ENCODE measurements at regions of chr2 and their contacts with region 1.

Region 1: DNA sequence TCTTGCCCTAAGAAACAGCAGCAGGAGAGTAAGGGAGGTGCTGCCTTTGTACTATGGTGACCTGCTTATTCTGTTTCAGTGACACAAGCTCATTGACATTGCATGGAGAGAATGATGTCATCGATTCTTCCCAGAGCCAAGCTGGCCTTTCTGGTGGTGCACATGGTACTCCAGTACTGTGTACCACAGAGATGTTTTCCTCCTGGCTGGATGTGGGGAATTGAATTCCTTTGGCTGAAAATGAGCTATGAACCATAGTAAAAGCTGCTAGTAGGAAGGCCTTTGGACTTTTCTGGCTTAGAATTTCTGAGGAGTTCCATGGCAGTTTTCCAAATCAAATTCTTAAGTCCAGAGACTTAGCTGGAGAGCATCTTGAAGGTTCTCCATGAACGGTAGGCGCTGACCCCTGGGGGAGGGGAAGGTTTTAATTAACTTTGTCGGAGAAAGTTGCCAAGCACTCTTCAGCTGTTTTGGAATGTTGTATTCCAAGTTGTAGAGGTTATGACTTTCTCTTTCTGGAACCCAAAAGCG is 17.1 kb upstream of the B3GNT2 start:
- DNase-seq: peak; percentile 53
- H3K4me3 ChIP-seq: no peak overlapping the region
- H3K27ac ChIP-seq: no peak overlapping the region
- H3K4me1 ChIP-seq: no peaks in the 10 kb centered on the region
- H3K27me3 ChIP-seq: no peaks in the 10 kb centered on the region
- CTCF ChIP-seq: no peak
- POLR2A ChIP-seq: no peak

Region 2: GRCh38 chr2:61727746-61728145 is 451.1 kb before region 1 on chr2:
- intact Hi-C with region 1: no loop called
- DNase-seq: no peak
- H3K4me3 ChIP-seq: no peak overlapping the region
- H3K27ac ChIP-seq: no peak overlapping the region
- H3K4me1 ChIP-seq: no peaks in the 10 kb centered on the region
- H3K27me3 ChIP-seq: no peaks in the 10 kb centered on the region
- CTCF ChIP-seq: no peak
- POLR2A ChIP-seq: no peak

Region 3: GRCh38 chr2:62234755-62235655 is 56.2 kb after region 1 on chr2:
- intact Hi-C with region 1: no loop called
- DNase-seq: no peak
- H3K4me3 ChIP-seq: no peak overlapping the region
- H3K27ac ChIP-seq: no peak overlapping the region
- H3K4me1 ChIP-seq: no peaks in the 10 kb centered on the region
- H3K27me3 ChIP-seq: no peaks in the 10 kb centered on the region
- CTCF ChIP-seq: no peak
- POLR2A ChIP-seq: no peak

Region 4: DNA sequence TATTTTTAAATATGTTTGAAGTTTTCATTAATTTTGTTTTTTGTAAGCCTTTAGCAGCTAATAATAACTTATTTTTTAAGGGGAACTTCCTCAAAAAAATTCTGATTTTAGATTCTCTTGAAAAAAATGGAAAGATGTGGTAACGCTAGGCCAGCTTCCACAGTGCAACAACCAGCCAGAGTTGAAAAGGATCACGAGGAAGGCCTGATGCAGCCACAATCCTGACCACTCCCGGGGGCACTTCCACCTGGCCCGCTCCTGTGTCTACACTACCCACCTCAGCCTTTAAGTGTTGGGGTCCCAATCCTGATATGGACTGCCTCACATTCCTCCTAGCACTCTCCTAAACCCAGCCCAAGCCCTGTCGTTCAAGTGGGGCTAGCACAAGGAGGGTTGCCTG is 226.1 kb after region 1 on chr2:
- intact Hi-C with region 1: loop called (anchors 5 kb)
- DNase-seq: no peak
- H3K4me3 ChIP-seq: no peak overlapping the region
- H3K27ac ChIP-seq: no peak overlapping the region
- H3K4me1 ChIP-seq: peaks cover 2% of the 10 kb centered on the region
- H3K27me3 ChIP-seq: no peaks in the 10 kb centered on the region
- CTCF ChIP-seq: no peak
- POLR2A ChIP-seq: no peak

Region 5: DNA sequence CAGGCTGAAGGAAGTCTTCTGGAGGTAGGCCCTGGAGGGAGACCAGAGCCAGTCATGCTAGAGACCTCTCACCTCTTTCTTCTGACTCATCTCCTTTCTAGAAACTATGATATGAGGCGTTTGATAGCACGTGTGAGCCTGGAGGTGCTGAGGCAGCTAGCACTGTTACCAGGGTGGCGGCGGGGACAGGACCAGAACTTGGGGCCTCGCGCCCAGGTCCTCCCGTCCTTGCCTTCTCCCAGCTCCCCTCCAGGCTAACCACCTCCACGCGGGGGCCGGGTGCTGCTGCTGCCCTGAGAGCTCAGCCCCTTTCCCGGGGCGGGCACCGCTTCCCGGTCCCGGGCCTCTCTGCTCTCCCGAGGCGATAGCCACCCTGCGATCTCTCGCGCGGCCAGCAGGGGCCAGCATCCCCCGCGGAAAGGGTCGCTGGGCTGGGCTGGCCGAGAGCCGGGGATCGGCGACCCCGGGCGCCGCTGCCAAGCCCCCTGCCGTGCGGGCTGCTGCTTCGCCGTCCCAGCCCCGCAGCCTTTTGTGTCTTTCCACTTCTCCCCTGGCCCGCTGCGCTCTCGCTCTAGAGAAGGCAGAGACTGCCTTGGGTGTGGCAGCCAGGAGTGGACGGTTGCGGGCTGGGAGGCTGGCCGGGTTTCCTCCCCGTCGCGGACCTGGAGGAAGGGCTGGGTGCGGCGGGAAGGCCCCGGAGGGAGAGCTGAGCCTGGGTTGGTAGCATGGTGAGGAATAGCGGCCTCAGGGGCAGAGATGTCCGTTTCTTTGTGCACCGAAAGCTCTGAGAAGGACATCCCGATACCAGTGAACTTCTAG is 278.1 kb after region 1 on chr2:
- intact Hi-C with region 1: no loop called
- DNase-seq: peak; percentile 71
- H3K4me3 ChIP-seq: peak overlapping the region; percentile 65 to 76
- H3K27ac ChIP-seq: peak overlapping the region; percentile 21 to 73
- H3K4me1 ChIP-seq: peaks cover 9% of the 10 kb centered on the region
- H3K27me3 ChIP-seq: no peaks in the 10 kb centered on the region
- CTCF ChIP-seq: peak; percentile 90 to 94 (median 93)
- POLR2A ChIP-seq: no peak